ENCODE measurements at regions of chr1 and their contacts with region 1.

Region 1: GRCh38 chr1:86380257-86380861 is 15.8 kb downstream of the ODF2L start:
- DNase-seq: peak; percentile 41
- H3K4me3 ChIP-seq: peak overlapping the region in 1 of 2 experiments; percentile 23; a peak in 1 of 4 replicates
- H3K27ac ChIP-seq: no peak overlapping the region
- H3K4me1 ChIP-seq: no peaks in the 10 kb centered on the region; a peak in 1 of 4 replicates
- H3K27me3 ChIP-seq: no peaks in the 10 kb centered on the region
- CTCF ChIP-seq: peak; percentile 78
- EP300 ChIP-seq: no peak
- RAD21 ChIP-seq: peak; percentile 90

Region 2: DNA sequence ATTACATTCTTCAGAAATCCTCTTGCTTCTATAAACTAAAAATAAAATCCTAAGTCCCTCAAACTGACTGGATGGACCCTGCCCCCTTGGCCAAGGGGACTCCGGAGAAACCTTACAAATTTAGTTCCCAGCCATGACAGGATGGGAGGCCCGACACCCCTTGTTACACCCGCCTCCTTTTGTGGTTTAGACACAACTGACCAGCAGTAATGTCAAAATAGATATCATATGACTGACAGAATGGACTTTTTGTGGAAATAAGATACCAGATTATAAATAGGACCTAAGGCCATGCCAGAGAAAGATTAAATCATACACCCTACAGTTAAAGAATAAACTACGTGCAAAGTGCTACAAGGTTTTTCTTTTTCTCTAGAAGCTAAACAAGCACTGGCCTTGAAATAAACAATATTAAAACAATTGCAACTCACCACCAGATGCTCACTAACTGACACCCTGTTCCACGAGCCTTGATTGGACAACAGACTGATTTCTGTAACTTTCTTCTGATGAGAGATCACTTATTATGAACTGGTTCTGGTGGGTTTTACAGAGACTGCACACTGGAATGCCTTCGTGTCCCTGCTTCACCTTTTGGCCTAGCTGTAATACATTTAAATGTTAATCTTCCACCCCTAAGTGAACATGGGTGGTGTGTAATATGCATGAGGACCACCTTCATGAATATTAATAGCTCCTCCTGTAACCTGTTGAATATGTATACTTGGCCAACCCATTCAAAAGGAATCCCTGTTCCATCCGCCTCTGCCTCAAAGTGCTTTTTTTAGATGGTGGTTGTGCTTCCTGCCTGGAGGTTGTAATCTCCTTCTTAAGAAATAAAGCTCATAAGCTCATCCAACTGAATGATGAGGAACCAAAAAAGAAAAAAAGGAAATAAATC is 83.8 kb before region 1 on chr1:
- CTCF ChIA-PET with region 1: no interaction called
- POLR2A ChIA-PET with region 1: no interaction called
- DNase-seq: no peak
- H3K4me3 ChIP-seq: no peak overlapping the region
- H3K27ac ChIP-seq: no peak overlapping the region
- H3K4me1 ChIP-seq: no peaks in the 10 kb centered on the region
- H3K27me3 ChIP-seq: no peaks in the 10 kb centered on the region
- CTCF ChIP-seq: no peak
- EP300 ChIP-seq: no peak
- RAD21 ChIP-seq: no peak

Region 3: DNA sequence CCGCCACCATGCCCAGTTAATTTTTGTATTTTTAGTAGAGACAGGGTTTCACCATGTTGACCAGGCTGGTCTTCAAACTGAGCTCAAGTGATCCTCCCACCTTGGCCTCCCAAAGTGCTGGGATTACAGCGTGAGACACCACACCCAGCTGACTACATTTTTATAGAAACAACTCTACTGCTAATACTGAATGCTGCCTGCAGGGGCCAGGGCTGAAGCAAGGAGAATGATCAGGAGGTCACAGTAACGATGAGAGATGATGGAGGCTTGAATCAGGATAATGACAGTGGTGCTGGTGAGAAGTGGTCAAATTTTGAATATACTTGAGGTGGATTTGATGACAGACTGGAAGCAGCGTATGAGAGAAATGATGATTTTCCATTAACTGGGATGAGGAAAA is 17.6 kb before region 1 on chr1:
- CTCF ChIA-PET with region 1: interaction called, 12 read pairs
- POLR2A ChIA-PET with region 1: no interaction called
- DNase-seq: no peak
- H3K4me3 ChIP-seq: no peak overlapping the region
- H3K27ac ChIP-seq: no peak overlapping the region
- H3K4me1 ChIP-seq: no peaks in the 10 kb centered on the region
- H3K27me3 ChIP-seq: no peaks in the 10 kb centered on the region
- CTCF ChIP-seq: no peak
- EP300 ChIP-seq: no peak
- RAD21 ChIP-seq: no peak

Region 4: DNA sequence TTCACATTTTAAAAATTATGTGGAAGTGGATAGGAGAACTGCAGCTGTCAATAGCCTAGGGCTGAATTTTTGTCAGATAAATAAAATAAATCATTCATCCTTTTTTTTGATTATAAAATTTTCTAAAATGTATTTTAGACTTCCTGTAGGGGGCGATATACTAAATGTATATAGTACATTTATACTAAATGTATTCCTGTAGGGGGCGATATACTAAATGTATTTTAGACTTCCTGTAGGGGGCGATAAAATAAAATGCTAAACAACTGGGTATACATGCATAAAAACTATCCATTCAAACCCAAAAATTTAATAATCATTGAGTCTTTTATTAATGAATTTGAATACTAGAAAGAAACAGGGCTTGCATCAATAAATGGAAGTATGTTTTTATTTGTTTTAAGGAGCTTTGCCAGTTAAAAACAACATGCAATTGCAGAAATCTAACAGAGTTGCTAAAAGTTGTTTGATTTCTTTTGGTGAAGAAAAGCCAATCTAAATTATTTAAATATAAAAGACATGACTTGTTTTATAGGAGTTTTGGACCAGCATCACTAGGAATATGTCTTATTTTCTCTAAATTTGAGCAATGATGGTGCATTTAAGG is 119.7 kb after region 1 on chr1:
- CTCF ChIA-PET with region 1: interaction called, 25 read pairs
- POLR2A ChIA-PET with region 1: no interaction called
- DNase-seq: peak; percentile 25
- H3K4me3 ChIP-seq: peak overlapping the region in 1 of 2 experiments; percentile 43; a peak in 1 of 4 replicates
- H3K27ac ChIP-seq: no peak overlapping the region
- H3K4me1 ChIP-seq: no peaks in the 10 kb centered on the region; a peak in 1 of 4 replicates
- H3K27me3 ChIP-seq: peaks cover 5% of the 10 kb centered on the region; the same call in 1 of the 2 replicates
- CTCF ChIP-seq: peak; percentile 99
- EP300 ChIP-seq: no peak
- RAD21 ChIP-seq: no peak; the same call in 1 of the 2 replicates

Region 5: GRCh38 chr1:86507935-86508582 is 127.7 kb after region 1 on chr1:
- CTCF ChIA-PET with region 1: interaction called, 25 read pairs
- POLR2A ChIA-PET with region 1: no interaction called
- DNase-seq: no peak
- H3K4me3 ChIP-seq: no peak overlapping the region
- H3K27ac ChIP-seq: no peak overlapping the region
- H3K4me1 ChIP-seq: no peaks in the 10 kb centered on the region; a peak in 1 of 4 replicates
- H3K27me3 ChIP-seq: no peaks in the 10 kb centered on the region
- CTCF ChIP-seq: peak; percentile 61
- EP300 ChIP-seq: no peak
- RAD21 ChIP-seq: peak; percentile 42; the same call in 1 of the 2 replicates